Posterior vena cava (tissue), 2 donors: ENCODE measurements at regions of chr20 and their contacts with region 1.

Region 1: DNA sequence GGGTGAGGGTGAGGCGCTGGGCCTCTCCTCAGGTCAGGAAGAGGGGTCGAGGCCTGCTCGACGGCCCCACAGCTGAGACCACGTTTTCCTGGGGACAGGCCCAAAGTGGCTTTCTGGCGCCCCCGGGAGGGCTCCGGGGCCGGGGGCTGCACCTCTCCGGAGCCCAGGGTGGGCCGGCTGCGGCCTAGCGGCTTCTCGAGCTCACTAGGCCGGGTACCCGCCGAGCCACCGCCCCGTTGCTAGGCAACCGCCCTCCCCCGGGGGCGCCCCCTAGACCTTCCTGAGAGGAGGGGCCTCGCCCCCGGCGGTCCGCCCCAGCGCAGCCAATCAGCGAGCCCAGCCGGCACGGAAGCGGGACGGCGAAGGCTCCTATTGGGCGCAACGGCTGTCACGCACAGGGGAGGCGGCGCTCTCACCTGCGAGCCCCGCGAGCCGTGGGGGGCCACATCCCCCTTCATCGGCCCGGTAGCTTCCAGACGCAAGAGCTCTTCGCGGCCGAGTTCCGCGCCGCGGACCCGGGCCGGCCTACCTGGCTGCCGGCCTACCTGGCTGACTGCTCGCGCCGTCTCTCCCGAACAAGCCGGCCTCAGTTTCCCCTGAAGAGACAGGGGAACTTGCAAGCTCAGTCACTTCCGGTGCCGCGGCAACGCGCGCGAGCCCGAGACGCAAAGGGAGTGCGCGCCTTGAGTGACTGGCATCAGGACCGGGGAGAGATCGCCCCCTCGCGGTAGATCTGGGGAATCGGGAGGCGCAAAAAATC is 831 bp upstream of the BCL2L1 start:
- DNase-seq: peak; percentile 99

Region 2: GRCh38 chr20:31341470-31341869 is 382.0 kb before region 1 on chr20:
- intact Hi-C with region 1: no loop called
- DNase-seq: no peak

Region 3: DNA sequence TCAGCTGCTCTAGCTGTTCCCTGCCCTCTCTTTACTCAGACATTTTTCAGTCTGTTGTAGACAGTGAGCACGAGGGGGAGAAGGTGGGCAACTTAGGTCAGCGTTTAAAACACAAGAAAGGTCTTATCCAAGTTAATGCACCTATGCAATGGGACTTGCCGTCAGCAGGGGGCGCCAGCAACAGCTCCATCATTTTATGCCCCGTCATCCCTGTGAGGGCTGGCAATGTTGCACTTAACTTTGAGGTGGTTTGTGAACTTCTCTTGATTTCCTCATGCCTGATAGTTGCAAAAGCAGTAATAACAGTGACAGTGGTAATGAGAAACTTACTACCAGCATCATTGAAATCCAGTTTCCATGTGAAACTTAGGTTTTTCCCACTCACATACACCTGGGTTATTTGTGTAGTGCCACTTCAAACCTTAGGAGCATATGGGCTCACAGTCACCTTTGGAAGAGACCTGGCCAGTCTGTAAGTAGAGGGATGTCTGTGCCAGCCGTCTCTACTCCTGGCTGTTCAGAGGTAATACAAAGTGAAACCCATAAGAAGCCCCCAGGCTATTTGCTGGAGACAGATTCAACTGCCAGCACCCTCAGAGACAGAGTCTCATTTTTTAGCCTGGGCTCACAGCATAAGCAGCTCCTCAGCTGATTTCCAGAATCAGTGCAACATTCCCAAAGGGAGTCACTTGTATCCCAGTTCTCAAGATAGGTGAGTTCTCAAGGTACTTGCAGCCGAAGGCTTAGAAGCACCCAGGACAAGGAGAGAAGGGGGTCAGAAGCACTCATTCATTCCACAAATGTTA is 163.2 kb before region 1 on chr20:
- intact Hi-C with region 1: loop called in 1 of 2 experiments (anchors 10 kb)
- DNase-seq: peak; percentile 93

Region 4: GRCh38 chr20:31654534-31654933 is 69.0 kb before region 1 on chr20:
- intact Hi-C with region 1: loop called in 1 of 2 experiments (anchors 2 kb)
- DNase-seq: no peak

Region 5: DNA sequence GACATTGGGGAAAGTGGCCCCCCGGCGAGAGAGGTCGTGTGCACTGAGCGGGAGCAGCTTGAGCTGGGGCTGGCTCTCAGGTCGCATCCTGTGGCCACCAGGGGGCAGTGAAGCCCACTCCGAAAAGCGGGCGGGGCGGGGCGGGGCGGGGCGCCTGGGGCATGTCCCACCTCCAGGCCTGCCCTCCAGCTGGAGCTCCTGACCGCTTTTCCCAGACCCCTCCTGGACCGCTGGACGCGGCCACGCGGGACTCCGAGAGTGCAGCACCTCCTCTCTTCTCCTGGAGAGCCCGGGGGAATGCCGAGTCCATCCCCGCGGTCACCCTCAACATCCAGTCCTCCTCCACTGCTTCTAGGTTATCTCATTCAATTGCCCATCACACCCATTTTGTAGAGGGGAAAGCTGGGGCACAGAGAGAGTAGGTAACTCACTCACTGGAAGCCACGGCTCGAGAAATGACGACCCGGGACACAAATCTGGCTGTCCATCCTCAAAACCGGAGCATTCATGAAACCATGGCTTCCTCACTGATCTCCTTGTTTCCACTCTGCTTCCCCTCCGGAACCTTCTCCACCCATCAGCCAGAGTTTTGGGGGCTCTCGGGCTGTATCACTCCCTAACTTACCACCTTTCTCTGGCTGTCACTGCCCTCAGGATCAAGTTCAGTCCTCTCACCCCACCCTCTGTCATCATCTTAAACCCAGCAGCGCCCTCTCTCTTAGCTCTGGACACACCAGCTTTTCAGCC is 61.7 kb before region 1 on chr20:
- intact Hi-C with region 1: loop called in 1 of 2 experiments (anchors 2 kb)
- DNase-seq: peak; percentile 94

Region 6: GRCh38 chr20:33401184-33401920 is 1677.9 kb after region 1 on chr20 and contains the start of gene CDK5RAP1:
- intact Hi-C with region 1: loop called in 1 of 2 experiments (anchors 5 kb)
- DNase-seq: peak; percentile 95
- total RNA-seq, gene CDK5RAP1: 15.9 to 19.8 TPM